GM10248 (cell line): ENCODE measurements at regions of chr7 and their contacts with region 1.

Region 1: DNA sequence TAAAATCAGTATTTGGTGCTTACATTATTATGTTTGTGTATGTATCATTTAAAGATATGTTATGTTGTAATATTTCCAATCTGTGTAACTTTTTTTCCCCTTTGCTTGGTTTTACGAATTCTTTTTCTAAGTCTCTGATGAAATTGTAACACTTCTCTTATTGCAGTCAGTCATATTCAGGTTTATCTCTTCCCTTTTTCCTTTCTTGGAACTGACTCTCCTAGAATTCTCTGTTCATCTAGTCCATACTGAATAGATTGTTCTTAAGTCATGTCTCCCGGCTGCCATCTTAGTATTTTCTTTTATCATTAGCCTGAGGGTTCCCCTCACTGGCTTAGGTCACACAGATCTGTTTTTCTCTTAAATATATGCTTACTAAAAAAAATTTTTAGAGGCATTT is 44.6 kb downstream of the PHTF2 start:
- DNase-seq: no peak
- CTCF ChIP-seq: no peak

Region 2: GRCh38 chr7:77855371-77856083 is 12.3 kb after region 1 on chr7:
- CTCF ChIA-PET with region 1: interaction called, 11 read pairs
- POLR2A ChIA-PET with region 1: no interaction called
- DNase-seq: no peak
- CTCF ChIP-seq: no peak